ENCODE measurements at regions of chr7 and their contacts with region 1.

Region 1: GRCh38 chr7:87993269-87993668 is 59.2 kb downstream of the ADAM22 start:
- DNase-seq: no peak
- ATAC-seq: no peak
- H3K4me3 ChIP-seq: no peak overlapping the region
- H3K4me3 Mint-ChIP-seq: no peak overlapping the region
- H3K27ac ChIP-seq: no peak overlapping the region
- H3K27ac Mint-ChIP-seq: no peak overlapping the region
- H3K4me1 ChIP-seq: no peaks in the 10 kb centered on the region
- H3K4me1 Mint-ChIP-seq: no peaks in the 10 kb centered on the region
- H3K27me3 ChIP-seq: no peaks in the 10 kb centered on the region
- H3K27me3 Mint-ChIP-seq: no peaks in the 10 kb centered on the region

Region 2: GRCh38 chr7:87948371-87948770 is 44.9 kb before region 1 on chr7:
- CTCF ChIA-PET with region 1: interaction called, 10 read pairs
- POLR2A ChIA-PET with region 1: no interaction called
- intact Hi-C with region 1: no loop called
- DNase-seq: no peak
- ATAC-seq: no peak
- H3K4me3 ChIP-seq: no peak overlapping the region
- H3K4me3 Mint-ChIP-seq: no peak overlapping the region
- H3K27ac ChIP-seq: no peak overlapping the region
- H3K27ac Mint-ChIP-seq: no peak overlapping the region
- H3K4me1 ChIP-seq: no peaks in the 10 kb centered on the region
- H3K4me1 Mint-ChIP-seq: no peaks in the 10 kb centered on the region
- H3K27me3 ChIP-seq: no peaks in the 10 kb centered on the region
- H3K27me3 Mint-ChIP-seq: no peaks in the 10 kb centered on the region

Region 3: DNA sequence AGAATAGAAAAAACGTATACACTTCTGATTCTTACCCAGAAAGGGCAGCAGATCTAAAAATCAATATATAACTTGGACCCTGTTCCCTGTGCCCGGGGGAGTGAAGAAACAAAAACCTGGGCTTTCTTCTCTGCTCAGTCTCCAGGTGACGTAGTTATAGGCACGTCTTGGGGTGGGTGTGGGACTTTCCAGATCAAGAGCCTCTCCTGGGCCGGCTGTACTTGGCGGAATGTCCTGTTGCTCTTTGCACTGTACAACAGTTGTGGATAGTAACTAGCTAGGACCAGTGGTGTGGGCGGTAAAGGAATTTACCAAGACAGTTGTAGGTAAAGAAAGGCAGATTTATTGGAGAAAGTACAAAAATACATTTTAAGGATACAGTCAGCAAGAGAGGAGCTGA is 353.8 kb after region 1 on chr7:
- CTCF ChIA-PET with region 1: no interaction called
- POLR2A ChIA-PET with region 1: no interaction called
- intact Hi-C with region 1: no loop called
- DNase-seq: no peak
- ATAC-seq: no peak
- H3K4me3 ChIP-seq: no peak overlapping the region
- H3K4me3 Mint-ChIP-seq: no peak overlapping the region
- H3K27ac ChIP-seq: no peak overlapping the region
- H3K27ac Mint-ChIP-seq: no peak overlapping the region
- H3K4me1 ChIP-seq: no peaks in the 10 kb centered on the region
- H3K4me1 Mint-ChIP-seq: peaks cover 0 to 1% (median 0%) of the 10 kb centered on the region in 7 donors
- H3K27me3 ChIP-seq: peaks cover 0 to 3% of the 10 kb centered on the region in 2 donors
- H3K27me3 Mint-ChIP-seq: peaks cover 7 to 42% (median 24%) of the 10 kb centered on the region in 5 donors

Measured in naive thymus-derived CD4-positive, alpha-beta T cell (primary cell).